ENCODE measurements at regions of chr12 and their contacts with region 1.

Region 1: DNA sequence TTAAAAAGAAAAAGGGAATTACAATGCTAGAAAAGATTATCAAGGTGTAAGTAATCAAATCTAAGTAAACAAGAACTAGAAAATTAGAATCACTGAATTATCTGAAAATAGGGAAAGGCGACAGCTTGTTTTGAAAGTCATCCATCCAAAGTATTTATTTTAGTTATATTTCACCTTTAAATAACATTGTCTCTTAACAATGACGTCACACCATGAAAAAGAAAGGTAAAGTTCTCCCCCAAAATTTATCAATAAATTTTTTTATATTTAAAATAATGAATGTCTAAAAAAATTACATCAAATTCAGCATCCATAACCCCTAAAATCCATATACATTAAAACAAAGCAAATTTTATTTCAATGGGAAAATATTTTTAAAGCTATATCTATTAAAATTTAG is 223.2 kb downstream of the RERGL start:
- DNase-seq: no peak
- ATAC-seq: no peak
- H3K4me3 ChIP-seq: no peak overlapping the region
- H3K27ac ChIP-seq: no peak overlapping the region
- H3K4me1 ChIP-seq: no peaks in the 10 kb centered on the region
- H3K27me3 ChIP-seq: no peaks in the 10 kb centered on the region
- CTCF ChIP-seq: no peak
- POLR2A ChIP-seq: no peak

Region 2: GRCh38 chr12:17778242-17778641 is 88.6 kb before region 1 on chr12:
- intact Hi-C with region 1: loop called (anchors 2 to 10 kb)
- DNase-seq: no peak
- ATAC-seq: no peak
- H3K4me3 ChIP-seq: no peak overlapping the region
- H3K27ac ChIP-seq: no peak overlapping the region
- H3K4me1 ChIP-seq: no peaks in the 10 kb centered on the region
- H3K27me3 ChIP-seq: no peaks in the 10 kb centered on the region
- CTCF ChIP-seq: no peak
- POLR2A ChIP-seq: no peak

Region 3: GRCh38 chr12:17829813-17830212 is 37.0 kb before region 1 on chr12:
- intact Hi-C with region 1: no loop called
- DNase-seq: no peak
- ATAC-seq: no peak
- H3K4me3 ChIP-seq: no peak overlapping the region
- H3K27ac ChIP-seq: no peak overlapping the region
- H3K4me1 ChIP-seq: no peaks in the 10 kb centered on the region
- H3K27me3 ChIP-seq: no peaks in the 10 kb centered on the region
- CTCF ChIP-seq: no peak
- POLR2A ChIP-seq: no peak